CD4-positive, alpha-beta memory T cell (primary cell): ENCODE measurements at regions of chr12 and their contacts with region 1.

Region 1: DNA sequence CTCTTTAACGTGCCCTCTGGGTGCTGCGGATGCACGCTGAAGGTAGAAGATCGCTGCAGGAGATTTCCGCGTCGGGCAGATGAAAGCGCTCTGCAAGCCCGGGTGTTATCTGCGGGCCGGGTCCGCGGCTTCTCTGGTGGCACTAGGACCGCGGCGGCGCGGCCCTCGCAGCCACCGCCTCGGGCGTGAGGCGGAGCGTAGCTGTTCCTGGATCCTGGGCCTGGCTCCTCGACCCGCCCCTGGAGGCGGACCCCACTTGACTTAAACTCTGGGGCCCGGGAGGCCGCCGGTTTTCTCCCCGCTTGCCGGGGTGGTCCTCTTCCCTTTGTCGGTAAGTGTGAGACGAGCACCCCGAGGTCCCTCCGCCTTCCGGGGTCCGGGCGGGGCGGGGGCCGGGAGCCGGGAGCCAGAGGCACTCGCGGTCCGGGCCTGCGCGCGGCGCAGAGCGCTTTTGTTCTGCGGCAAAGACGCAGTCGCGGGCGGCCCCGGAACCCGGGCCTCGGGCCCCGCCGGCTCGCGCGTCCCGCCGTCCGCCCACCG is at the start of gene RESF1:
- DNase-seq: peak; percentile 88 to 90 (median 89)
- H3K4me3 ChIP-seq: peak within 1 kb of the TSS; percentile 95 to 100
- H3K4me3 Mint-ChIP-seq: peak within 1 kb of the TSS; percentile 94 to 98 (median 97)
- H3K27ac ChIP-seq: peak within 1 kb of the TSS; percentile 72
- H3K27ac Mint-ChIP-seq: peak within 1 kb of the TSS; percentile 94 to 98 (median 97)
- H3K4me1 ChIP-seq: peaks cover 61% of the 10 kb centered on the region
- H3K4me1 Mint-ChIP-seq: peaks cover 45 to 83% (median 57%) of the 10 kb centered on the region in 4 donors
- H3K27me3 ChIP-seq: no peaks in the 10 kb centered on the region
- H3K27me3 Mint-ChIP-seq: no peaks in the 10 kb centered on the region
- total RNA-seq, gene RESF1: 539 to 545 TPM

Region 2: DNA sequence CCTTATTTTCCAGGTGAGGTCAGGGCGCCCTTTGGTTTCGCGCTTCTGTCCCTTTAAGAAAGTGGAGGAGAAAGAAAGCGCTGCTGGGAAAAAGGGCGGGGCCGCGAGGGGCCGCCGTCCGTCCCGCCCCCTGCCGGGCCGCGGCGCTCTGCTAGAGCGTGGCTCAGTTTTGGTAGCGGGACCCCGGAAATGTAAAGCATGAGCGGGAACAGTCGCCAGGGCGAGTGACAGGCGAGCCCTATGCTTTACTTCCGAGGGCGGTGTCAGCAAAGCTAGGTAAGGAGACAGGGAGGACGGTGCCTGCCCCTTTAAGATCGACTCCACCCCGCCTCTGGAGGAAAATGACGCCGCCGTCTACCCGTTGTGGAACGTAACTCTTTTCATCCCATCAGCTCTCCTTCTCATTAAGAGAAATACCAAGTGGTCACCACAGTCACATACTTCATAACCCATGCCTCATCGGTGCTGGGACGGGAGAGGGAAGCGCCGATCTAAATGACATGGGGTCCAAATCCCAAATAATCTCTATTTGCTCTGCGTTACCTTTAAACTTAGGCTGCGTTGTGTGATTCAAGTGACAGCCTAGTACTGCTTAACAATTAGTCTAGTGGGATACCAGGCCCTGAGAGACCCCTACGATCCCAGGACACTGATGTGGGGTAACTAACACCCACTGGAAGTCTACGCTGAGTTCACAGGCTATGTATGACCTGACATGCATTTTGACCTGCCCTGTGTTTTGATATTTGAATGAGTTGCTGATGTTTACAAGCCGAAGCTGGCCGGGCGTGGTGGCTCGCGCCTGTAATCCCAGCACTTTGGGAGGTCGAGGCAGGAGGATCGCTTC is 299.9 kb before region 1 on chr12 and contains the start of gene ETFBKMT:
- CTCF ChIA-PET with region 1: interaction called, 7 read pairs
- POLR2A ChIA-PET with region 1: interaction called, 49 read pairs
- intact Hi-C with region 1: loop called (anchors 1 kb)
- DNase-seq: peak; percentile 91 to 97 (median 94)
- H3K4me3 ChIP-seq: peak within 1 kb of the TSS; percentile 86 to 89
- H3K4me3 Mint-ChIP-seq: peak within 1 kb of the TSS; percentile 92 to 99 (median 94)
- H3K27ac ChIP-seq: peak within 1 kb of the TSS; percentile 86
- H3K27ac Mint-ChIP-seq: peak within 1 kb of the TSS; percentile 91 to 99 (median 98)
- H3K4me1 ChIP-seq: peaks cover 17% of the 10 kb centered on the region
- H3K4me1 Mint-ChIP-seq: peaks cover 8 to 21% (median 14%) of the 10 kb centered on the region in 4 donors
- H3K27me3 ChIP-seq: no peaks in the 10 kb centered on the region
- H3K27me3 Mint-ChIP-seq: no peaks in the 10 kb centered on the region
- total RNA-seq, gene ETFBKMT: 1.5 to 1.8 TPM

Region 3: DNA sequence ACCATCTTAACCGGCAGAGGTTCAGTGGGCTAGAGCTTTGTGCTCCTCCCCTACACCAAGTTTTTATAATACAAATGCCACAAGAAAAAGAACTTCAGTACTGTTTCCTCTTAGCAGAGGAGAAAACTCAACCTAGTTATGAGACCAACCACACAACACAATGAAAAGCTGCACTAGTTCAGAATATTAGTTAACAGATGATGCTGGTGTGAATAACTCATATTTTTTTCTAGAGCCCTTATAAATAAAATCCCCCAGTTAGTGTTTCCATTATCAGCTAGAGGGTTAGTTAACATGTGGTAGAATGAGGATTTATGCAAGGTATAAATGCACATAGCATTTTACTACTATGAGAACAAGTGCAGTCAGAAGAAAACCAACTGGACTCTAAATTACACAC is 168.5 kb before region 1 on chr12:
- CTCF ChIA-PET with region 1: interaction called, 9 read pairs
- POLR2A ChIA-PET with region 1: interaction called, 11 read pairs
- intact Hi-C with region 1: no loop called
- DNase-seq: no peak
- H3K4me3 ChIP-seq: no peak overlapping the region
- H3K4me3 Mint-ChIP-seq: peak overlapping the region in 6 of 8 donors; percentile 4 to 51 (median 26)
- H3K27ac ChIP-seq: no peak overlapping the region
- H3K27ac Mint-ChIP-seq: peak overlapping the region in 4 of 7 donors; percentile 32 to 87 (median 62)
- H3K4me1 ChIP-seq: peaks cover 20% of the 10 kb centered on the region
- H3K4me1 Mint-ChIP-seq: peaks cover 20 to 30% (median 26%) of the 10 kb centered on the region in 4 donors
- H3K27me3 ChIP-seq: no peaks in the 10 kb centered on the region
- H3K27me3 Mint-ChIP-seq: no peaks in the 10 kb centered on the region

Region 4: GRCh38 chr12:31874961-31875608 is 84.1 kb before region 1 on chr12:
- CTCF ChIA-PET with region 1: interaction called, 3 read pairs
- POLR2A ChIA-PET with region 1: interaction called, 18 read pairs
- intact Hi-C with region 1: loop called (anchors 5 kb)
- DNase-seq: peak; percentile 62 to 88 (median 73)
- H3K4me3 ChIP-seq: peak overlapping the region in 1 of 2 donors; percentile 9
- H3K4me3 Mint-ChIP-seq: peak overlapping the region in 7 of 8 donors; percentile 27 to 81 (median 75)
- H3K27ac ChIP-seq: peak overlapping the region; percentile 77
- H3K27ac Mint-ChIP-seq: peak overlapping the region; percentile 95 to 99 (median 98)
- H3K4me1 ChIP-seq: peaks cover 33% of the 10 kb centered on the region
- H3K4me1 Mint-ChIP-seq: peaks cover 31 to 64% (median 49%) of the 10 kb centered on the region in 4 donors
- H3K27me3 ChIP-seq: no peaks in the 10 kb centered on the region
- H3K27me3 Mint-ChIP-seq: no peaks in the 10 kb centered on the region

Region 5: DNA sequence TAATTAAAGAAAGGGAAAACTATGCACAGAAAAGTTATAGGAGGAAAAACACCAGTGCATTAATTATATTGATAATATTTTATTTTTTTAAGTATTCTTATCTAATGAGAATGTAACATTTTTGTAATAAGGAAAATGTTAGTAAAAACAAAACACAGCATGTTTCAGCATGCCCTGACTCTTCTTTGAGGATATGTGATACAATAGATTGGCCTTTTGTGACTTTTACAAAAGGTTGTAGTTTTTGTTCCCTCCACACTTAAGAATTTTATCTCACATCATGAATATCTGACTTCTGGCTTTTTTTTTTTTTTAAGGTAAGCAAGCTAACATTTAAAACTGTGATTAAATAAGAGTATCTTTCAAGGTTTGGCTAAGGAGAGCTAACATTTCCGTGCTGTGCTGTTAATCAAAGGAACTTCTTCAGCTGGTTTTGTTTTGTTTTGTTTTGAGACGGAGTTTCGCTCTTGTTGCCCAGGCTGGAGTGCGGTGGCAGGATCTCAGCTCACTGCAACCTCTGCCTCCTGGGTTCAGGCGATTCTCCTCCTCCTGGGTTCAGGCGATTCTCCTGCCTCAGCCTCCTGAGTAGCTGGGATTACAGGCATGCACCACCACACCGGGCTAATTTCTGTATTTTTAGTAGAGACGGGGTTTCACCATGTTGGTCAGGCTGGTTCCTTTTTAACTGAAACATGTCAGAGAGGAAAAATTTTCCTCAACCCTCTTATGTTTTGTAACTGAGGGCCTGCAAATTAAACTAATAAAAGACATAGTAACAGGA is 30.8 kb before region 1 on chr12:
- CTCF ChIA-PET with region 1: interaction called, 4 read pairs
- POLR2A ChIA-PET with region 1: interaction called, 63 read pairs
- intact Hi-C with region 1: loop called (anchors 2 kb)
- DNase-seq: peak in 4 of 5 donors; percentile 41 to 58 (median 50)
- H3K4me3 ChIP-seq: peak overlapping the region in 1 of 2 donors; percentile 22
- H3K4me3 Mint-ChIP-seq: peak overlapping the region; percentile 86 to 95 (median 90)
- H3K27ac ChIP-seq: peak overlapping the region; percentile 56
- H3K27ac Mint-ChIP-seq: peak overlapping the region; percentile 96 to 99 (median 97)
- H3K4me1 ChIP-seq: peaks cover 47% of the 10 kb centered on the region
- H3K4me1 Mint-ChIP-seq: peaks cover 43 to 61% (median 52%) of the 10 kb centered on the region in 4 donors
- H3K27me3 ChIP-seq: no peaks in the 10 kb centered on the region
- H3K27me3 Mint-ChIP-seq: no peaks in the 10 kb centered on the region

Region 6: DNA sequence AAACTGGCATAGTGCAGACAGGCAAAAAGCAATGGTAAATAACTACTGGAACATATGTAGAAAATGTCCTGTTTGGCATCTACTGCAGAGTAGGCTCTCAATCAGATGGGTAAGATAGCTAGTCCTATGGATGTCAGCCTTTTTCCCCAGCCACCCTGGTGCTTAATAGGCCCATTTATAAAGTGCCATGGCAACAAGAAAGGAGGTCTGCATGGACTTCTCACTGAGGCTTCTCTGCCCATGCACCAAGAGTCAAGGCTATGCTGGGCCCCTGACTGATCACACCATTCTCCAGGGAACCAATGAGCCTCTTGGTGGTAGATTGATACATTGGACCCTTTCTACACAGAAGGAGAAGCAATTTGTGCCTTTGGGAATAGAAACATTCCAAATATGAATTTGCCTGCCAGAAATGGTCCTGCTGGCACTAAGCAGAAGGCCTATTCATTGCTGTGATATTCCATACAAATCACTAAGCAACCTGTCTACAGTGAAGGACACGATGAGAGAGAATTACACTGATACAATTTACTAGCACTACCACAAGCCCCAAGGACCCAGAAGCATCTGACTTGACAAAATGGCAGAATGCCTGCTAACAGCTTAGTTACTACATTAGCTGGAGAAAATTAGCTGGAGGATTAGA is 43.7 kb after region 1 on chr12:
- CTCF ChIA-PET with region 1: interaction called, 5 read pairs
- POLR2A ChIA-PET with region 1: interaction called, 8 read pairs
- intact Hi-C with region 1: loop called (anchors 5 kb)
- DNase-seq: no peak
- H3K4me3 ChIP-seq: no peak overlapping the region
- H3K4me3 Mint-ChIP-seq: no peak overlapping the region
- H3K27ac ChIP-seq: no peak overlapping the region
- H3K27ac Mint-ChIP-seq: peak overlapping the region in 4 of 7 donors; percentile 2 to 82 (median 40)
- H3K4me1 ChIP-seq: no peaks in the 10 kb centered on the region
- H3K4me1 Mint-ChIP-seq: peaks cover 0 to 8% (median 5%) of the 10 kb centered on the region in 4 donors
- H3K27me3 ChIP-seq: no peaks in the 10 kb centered on the region
- H3K27me3 Mint-ChIP-seq: no peaks in the 10 kb centered on the region

Region 7: DNA sequence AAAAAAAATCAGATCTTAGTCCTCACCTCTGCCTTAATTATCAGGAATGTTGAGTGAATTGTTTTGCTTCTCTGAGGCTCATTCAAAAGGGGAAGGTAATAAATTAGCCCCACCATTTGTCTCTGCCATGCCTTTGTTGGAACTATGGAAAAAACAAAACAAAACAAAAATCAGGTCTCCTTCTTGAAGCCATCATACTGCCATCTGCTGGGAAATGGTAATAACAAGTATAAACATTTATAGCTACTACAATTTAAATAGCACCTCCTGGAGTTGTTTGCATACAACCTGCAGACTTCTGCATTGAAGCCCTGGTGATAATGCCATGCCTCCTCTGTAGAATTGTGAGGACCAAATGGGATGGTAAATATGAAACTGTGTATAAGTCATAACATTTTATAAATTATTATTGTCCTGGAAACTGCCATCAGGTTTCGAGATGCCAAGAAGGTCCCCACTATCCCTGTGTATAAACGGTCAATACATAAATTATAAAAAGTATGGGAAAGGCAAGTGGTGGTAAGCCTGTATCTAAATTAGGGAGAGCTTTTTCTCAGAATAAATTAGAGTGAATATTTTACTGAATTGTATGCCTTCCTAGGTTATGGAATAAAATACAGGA is 352.9 kb after region 1 on chr12:
- CTCF ChIA-PET with region 1: interaction called, 3 read pairs
- POLR2A ChIA-PET with region 1: no interaction called
- intact Hi-C with region 1: loop called (anchors 5 kb)
- DNase-seq: peak in 4 of 5 donors; percentile 31 to 52 (median 38)
- H3K4me3 ChIP-seq: no peak overlapping the region
- H3K4me3 Mint-ChIP-seq: peak overlapping the region in 2 of 8 donors; percentile 14 to 65
- H3K27ac ChIP-seq: no peak overlapping the region
- H3K27ac Mint-ChIP-seq: peak overlapping the region in 1 of 7 donors; percentile 87
- H3K4me1 ChIP-seq: no peaks in the 10 kb centered on the region
- H3K4me1 Mint-ChIP-seq: peaks cover 3 to 9% (median 4%) of the 10 kb centered on the region in 4 donors
- H3K27me3 ChIP-seq: no peaks in the 10 kb centered on the region
- H3K27me3 Mint-ChIP-seq: no peaks in the 10 kb centered on the region